Spleen (tissue), 13 donors: ENCODE measurements at regions of chr5 and their contacts with region 1.

Region 1: DNA sequence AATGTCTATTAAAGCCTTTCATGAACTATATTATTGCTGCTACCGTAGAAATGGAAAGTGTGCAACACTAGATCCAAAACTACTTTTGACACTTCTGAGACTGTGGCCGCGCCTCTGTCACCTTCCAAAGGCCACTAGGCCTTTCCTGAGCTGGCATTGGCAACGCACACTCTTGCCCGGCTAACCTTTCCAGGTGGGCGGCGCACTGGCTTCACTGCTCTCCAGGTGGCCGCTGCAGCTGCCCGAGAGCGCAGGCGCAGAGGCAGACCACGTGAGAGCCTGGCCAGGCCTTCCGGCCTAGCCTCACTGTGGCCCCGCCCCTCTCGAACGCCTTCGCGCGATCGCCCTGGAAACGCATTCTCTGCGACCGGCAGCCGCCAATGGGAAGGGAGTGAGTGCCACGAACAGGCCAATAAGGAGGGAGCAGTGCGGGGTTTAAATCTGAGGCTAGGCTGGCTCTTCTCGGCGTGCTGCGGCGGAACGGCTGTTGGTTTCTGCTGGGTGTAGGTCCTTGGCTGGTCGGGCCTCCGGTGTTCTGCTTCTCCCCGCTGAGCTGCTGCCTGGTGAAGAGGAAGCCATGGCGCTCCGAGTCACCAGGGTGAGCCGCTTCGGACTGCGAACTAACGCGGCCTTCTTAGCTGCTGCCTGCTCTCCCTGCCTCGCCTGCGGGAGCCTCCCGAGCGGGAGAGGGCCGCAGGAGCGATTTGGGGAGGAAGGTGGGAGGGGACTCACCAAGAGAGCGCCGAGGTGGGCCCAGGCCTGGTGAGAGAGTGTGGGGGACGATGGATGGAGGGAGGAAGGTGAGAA is at the start of gene CCNB1:
- DNase-seq: peak; percentile 100
- H3K4me3 ChIP-seq: peak within 1 kb of the TSS; percentile 81 to 93 (median 87)
- H3K27ac ChIP-seq: peak within 1 kb of the TSS; percentile 27 to 80 (median 68)
- H3K4me1 ChIP-seq: peaks cover 6 to 30% (median 24%) of the 10 kb centered on the region in 6 donors
- H3K27me3 ChIP-seq: no peaks in the 10 kb centered on the region
- CTCF ChIP-seq: peak in 2 of 11 experiments; percentile 32 to 34
- POLR2A ChIP-seq: no peak
- total RNA-seq, gene CCNB1: 4.5 to 22.6 (median 11.8) TPM

Region 2: DNA sequence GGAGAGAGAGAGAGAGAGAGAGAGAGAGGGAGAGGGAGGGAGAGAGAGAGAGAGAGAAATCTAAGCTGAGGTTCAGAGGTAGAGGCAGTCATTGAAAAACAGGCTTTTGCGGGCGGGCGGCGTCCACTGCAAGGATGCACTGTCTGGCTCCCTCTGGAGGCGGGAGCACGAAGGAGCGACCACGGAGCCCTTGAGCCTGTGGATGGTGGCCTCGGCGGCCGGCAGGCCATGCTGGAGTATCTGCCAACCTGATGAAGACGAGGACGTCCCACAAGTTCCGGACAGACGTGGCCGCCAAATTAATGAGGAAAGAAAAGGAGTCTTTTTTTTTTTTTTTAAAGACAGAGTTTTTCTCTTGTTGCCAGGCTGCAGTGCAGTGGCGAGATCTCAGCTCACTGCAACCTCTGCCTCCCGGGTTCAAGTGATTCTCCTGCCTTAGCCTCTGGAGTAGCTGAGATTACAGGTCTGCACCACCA is 167.9 kb after region 1 on chr5:
- intact Hi-C with region 1: loop called (anchors 10 kb)
- DNase-seq: peak; percentile 96
- H3K4me3 ChIP-seq: peak overlapping the region in 1 of 8 donors; percentile 5
- H3K27ac ChIP-seq: peak overlapping the region in 4 of 8 donors; percentile 45 to 73 (median 60)
- H3K4me1 ChIP-seq: peaks cover 0 to 41% (median 26%) of the 10 kb centered on the region in 6 donors
- H3K27me3 ChIP-seq: no peaks in the 10 kb centered on the region
- CTCF ChIP-seq: peak; percentile 46 to 90 (median 78)
- POLR2A ChIP-seq: no peak